ENCODE measurements at regions of chr17 and their contacts with region 1.

Region 1: GRCh38 chr17:32648450-32648849 is 161.7 kb downstream of the CDK5R1 start:
- DNase-seq: no peak
- ATAC-seq: no peak
- H3K4me3 Mint-ChIP-seq: no peak overlapping the region
- H3K27ac Mint-ChIP-seq: no peak overlapping the region
- H3K4me1 Mint-ChIP-seq: no peaks in the 10 kb centered on the region
- H3K27me3 Mint-ChIP-seq: no peaks in the 10 kb centered on the region

Region 2: DNA sequence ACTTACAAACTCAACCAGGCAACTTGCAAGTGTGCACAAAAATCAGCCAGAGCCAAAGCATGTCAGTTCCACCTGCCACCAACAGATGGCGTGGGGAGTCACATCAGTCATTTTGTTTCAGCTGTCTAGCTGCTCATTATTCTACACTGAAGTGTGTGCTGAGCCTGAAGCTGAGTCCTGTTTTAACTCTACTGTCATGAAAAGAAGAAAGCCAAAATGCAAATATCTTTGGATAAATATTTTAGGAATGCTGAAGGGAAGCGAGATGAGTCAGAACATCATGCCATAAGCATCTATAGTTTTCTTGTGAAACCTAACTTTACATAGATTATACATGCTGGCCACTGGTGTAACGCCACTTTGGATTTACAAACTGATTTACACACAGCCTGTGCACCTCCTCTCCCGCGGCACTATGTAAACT is 11.0 kb after region 1 on chr17:
- CTCF ChIA-PET with region 1: interaction called, 10 read pairs
- DNase-seq: peak; percentile 74
- ATAC-seq: peak; percentile 61
- H3K4me3 Mint-ChIP-seq: no peak overlapping the region
- H3K27ac Mint-ChIP-seq: no peak overlapping the region
- H3K4me1 Mint-ChIP-seq: peaks cover 8% of the 10 kb centered on the region
- H3K27me3 Mint-ChIP-seq: peaks cover 4% of the 10 kb centered on the region

Measured in activated CD8-positive, alpha-beta memory T cell treated with anti-CD3 and anti-CD28 coated beads, Interleukin-2, amount 10 ng/mL, durations not matched to agents 7 days and 5 days (primary cell).